ENCODE measurements at regions of chr5 and their contacts with region 1.

Region 1: DNA sequence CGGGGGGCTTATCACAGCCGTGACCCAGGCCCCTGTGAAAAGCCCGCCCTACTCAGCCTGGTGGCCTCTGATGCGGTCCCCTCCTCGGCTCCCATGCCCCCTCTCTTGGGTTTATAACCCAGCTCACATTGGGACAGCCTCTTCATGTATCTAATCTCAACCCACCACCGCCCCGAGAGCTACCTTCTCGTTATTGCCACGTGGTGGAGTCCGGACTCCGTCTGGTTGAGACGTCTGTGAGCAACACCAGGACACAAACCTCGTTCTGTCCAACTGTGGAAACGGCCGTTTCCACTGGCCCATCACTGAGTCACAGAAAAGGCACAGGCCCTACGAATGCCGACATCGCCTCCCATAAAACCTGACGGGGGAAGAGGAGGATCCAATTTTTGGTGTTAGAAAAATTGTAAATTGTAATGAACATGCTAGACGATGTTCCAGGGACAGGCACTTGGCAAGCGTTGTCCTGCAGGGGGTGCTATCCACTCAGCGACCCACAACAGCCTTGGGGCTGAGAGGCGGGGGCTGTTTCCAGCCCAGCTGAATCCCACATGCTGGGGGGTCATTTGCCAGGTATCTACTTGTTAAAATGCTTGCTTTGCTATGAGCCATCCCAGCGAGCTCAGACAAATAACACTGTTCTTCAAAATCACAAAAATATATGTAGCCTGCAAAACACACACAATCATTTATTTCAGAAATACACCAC is 37.3 kb upstream of the N4BP3 start:
- DNase-seq: no peak
- H3K4me3 ChIP-seq: no peak overlapping the region
- H3K27me3 ChIP-seq: peaks cover 17% of the 10 kb centered on the region
- CTCF ChIP-seq: peak; percentile 84

Region 2: DNA sequence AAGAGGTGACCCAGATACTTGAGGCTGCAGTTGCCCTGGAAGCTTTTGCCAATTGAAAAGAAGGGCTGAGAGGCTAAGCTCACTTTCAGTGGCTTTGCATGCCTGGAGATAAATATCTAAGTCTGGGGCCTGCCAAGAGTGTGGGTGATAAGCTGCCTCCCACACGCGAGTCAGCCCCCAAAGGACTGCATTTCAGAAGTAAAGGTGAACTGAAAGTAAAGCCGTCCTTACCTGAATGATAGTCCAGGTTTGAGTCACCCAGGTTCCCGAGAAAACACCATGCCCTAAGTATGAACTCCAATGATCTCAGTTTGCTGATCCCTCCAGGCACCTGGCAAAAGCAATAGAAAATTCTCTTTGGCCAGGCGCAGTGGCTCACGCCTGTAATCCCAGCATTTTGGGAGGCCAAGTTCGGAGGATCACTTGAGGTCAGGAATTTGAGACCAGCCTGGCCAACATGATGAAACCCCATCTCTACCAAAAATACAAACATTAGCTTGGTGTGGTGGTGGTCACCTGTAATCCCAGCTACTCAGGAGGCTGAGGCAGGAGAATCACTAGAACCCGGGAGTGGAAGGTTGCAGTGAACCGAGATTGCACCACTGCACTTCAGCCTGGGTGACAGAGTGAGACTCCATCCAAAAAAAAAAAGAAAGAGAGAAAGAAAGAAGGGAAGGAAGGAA is 15.0 kb after region 1 on chr5:
- CTCF ChIA-PET with region 1: interaction called, 20 read pairs
- POLR2A ChIA-PET with region 1: no interaction called
- DNase-seq: no peak
- H3K4me3 ChIP-seq: no peak overlapping the region
- H3K27me3 ChIP-seq: no peaks in the 10 kb centered on the region
- CTCF ChIP-seq: no peak

Region 3: GRCh38 chr5:178146020-178146820 is 70.2 kb after region 1 on chr5:
- CTCF ChIA-PET with region 1: interaction called, 18 read pairs
- POLR2A ChIA-PET with region 1: no interaction called
- DNase-seq: no peak
- H3K4me3 ChIP-seq: no peak overlapping the region
- H3K27me3 ChIP-seq: no peaks in the 10 kb centered on the region
- CTCF ChIP-seq: peak; percentile 77

Region 4: GRCh38 chr5:178153573-178154343 is 77.8 kb after region 1 on chr5 and contains the start of gene NHP2:
- CTCF ChIA-PET with region 1: interaction called, 80 read pairs
- POLR2A ChIA-PET with region 1: no interaction called
- DNase-seq: peak; percentile 89
- H3K4me3 ChIP-seq: peak within 1 kb of the TSS; percentile 85
- H3K27me3 ChIP-seq: no peaks in the 10 kb centered on the region
- CTCF ChIP-seq: no peak
- polyA plus RNA-seq, gene NHP2: 101 and 131 TPM in 2 replicates

Region 5: GRCh38 chr5:178165585-178165984 is 89.6 kb after region 1 on chr5:
- CTCF ChIA-PET with region 1: interaction called, 80 read pairs
- POLR2A ChIA-PET with region 1: no interaction called
- DNase-seq: no peak
- H3K4me3 ChIP-seq: no peak overlapping the region
- H3K27me3 ChIP-seq: peaks cover 24% of the 10 kb centered on the region
- CTCF ChIP-seq: no peak

Measured in BJ (cell line).